Breast epithelium (tissue), 4 donors: ENCODE measurements at regions of chr10 and their contacts with region 1.

Region 1: GRCh38 chr10:70726909-70727495 is 54.7 kb downstream of the ADAMTS14 start:
- DNase-seq: no peak
- H3K4me3 ChIP-seq: no peak overlapping the region
- H3K27ac ChIP-seq: no peak overlapping the region
- H3K4me1 ChIP-seq: no peaks in the 10 kb centered on the region
- H3K27me3 ChIP-seq: peaks cover 0 to 3% of the 10 kb centered on the region in 2 donors
- CTCF ChIP-seq: no peak
- POLR2A ChIP-seq: no peak

Region 2: GRCh38 chr10:69663369-69663947 is 1063.5 kb before region 1 on chr10:
- intact Hi-C with region 1: no loop called
- DNase-seq: no peak
- H3K4me3 ChIP-seq: no peak overlapping the region
- H3K27ac ChIP-seq: no peak overlapping the region
- H3K4me1 ChIP-seq: no peaks in the 10 kb centered on the region
- H3K27me3 ChIP-seq: no peaks in the 10 kb centered on the region
- CTCF ChIP-seq: no peak
- POLR2A ChIP-seq: no peak

Region 3: DNA sequence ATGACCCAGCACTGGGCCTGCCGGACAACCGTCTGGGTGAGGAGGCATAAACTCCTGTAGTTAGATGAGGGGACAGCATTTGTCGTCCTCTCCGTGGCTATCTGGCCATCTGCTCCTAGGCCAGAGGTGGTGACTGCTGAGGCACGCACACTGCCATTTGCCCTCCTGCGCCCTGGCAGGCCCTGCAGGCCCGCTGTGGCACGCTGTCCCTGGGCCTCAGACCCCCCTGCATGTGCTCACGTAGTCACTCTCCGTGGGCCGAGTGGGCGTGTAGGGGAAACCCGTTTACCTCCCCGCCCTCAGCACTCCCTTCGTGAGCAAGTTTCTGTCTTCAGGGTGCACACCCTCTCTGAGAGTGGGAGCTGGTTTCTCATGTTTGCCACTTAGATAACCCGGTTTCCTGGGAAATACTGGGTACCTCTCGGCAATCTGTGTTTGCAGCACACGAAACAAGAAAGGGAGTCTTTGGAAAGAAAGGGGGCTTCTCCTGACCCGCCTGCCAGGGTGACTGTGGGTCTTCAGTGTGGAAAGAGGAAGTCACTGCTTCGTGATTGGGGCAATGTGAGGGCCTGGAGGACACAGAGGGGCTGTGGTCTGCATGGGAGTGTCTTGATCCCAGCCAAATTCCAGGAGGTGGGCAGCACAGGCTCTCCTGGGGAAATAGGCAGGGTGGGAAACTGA is 43.9 kb before region 1 on chr10:
- intact Hi-C with region 1: no loop called
- DNase-seq: no peak
- H3K4me3 ChIP-seq: no peak overlapping the region
- H3K27ac ChIP-seq: no peak overlapping the region
- H3K4me1 ChIP-seq: no peaks in the 10 kb centered on the region
- H3K27me3 ChIP-seq: no peaks in the 10 kb centered on the region
- CTCF ChIP-seq: no peak
- POLR2A ChIP-seq: no peak

Region 4: GRCh38 chr10:70711177-70711576 is 15.8 kb before region 1 on chr10:
- intact Hi-C with region 1: loop called (anchors 1 kb)
- DNase-seq: no peak
- H3K4me3 ChIP-seq: no peak overlapping the region
- H3K27ac ChIP-seq: no peak overlapping the region
- H3K4me1 ChIP-seq: no peaks in the 10 kb centered on the region
- H3K27me3 ChIP-seq: no peaks in the 10 kb centered on the region
- CTCF ChIP-seq: no peak
- POLR2A ChIP-seq: no peak

Region 5: GRCh38 chr10:71756311-71757191 is 1029.5 kb after region 1 on chr10:
- intact Hi-C with region 1: no loop called
- DNase-seq: no peak
- H3K4me3 ChIP-seq: no peak overlapping the region
- H3K27ac ChIP-seq: peak overlapping the region; percentile 76 to 89
- H3K4me1 ChIP-seq: peaks cover 8 to 14% of the 10 kb centered on the region in 2 donors
- H3K27me3 ChIP-seq: no peaks in the 10 kb centered on the region
- CTCF ChIP-seq: no peak
- POLR2A ChIP-seq: no peak